Panc1 (cell line): ENCODE measurements at regions of chr7 and their contacts with region 1.

Region 1: GRCh38 chr7:32295155-32295554 is 195.0 kb downstream of the LSM5 start:
- DNase-seq: no peak
- ATAC-seq: no peak
- H3K4me3 ChIP-seq: no peak overlapping the region
- H3K27ac ChIP-seq: no peak overlapping the region
- H3K4me1 ChIP-seq: no peaks in the 10 kb centered on the region
- H3K27me3 ChIP-seq: peaks cover 8% of the 10 kb centered on the region; the same call in 1 of the 2 replicates
- CTCF ChIP-seq: no peak

Region 2: GRCh38 chr7:31314781-31315180 is 980.4 kb before region 1 on chr7:
- CTCF ChIA-PET with region 1: no interaction called
- POLR2A ChIA-PET with region 1: interaction called, 14 read pairs
- in situ Hi-C with region 1: no loop called
- intact Hi-C with region 1: no loop called
- DNase-seq: no peak
- ATAC-seq: no peak
- H3K4me3 ChIP-seq: no peak overlapping the region
- H3K27ac ChIP-seq: no peak overlapping the region
- H3K4me1 ChIP-seq: no peaks in the 10 kb centered on the region
- H3K27me3 ChIP-seq: peaks cover 7% of the 10 kb centered on the region
- CTCF ChIP-seq: no peak